ENCODE measurements at regions of chr4 and their contacts with region 1.

Region 1: GRCh38 chr4:112199040-112199439 is 32.5 kb upstream of the AP1AR start:
- DNase-seq: no peak
- H3K4me3 Mint-ChIP-seq: no peak overlapping the region
- H3K27ac Mint-ChIP-seq: no peak overlapping the region
- H3K4me1 Mint-ChIP-seq: peaks cover 21% of the 10 kb centered on the region
- H3K27me3 Mint-ChIP-seq: peaks cover 10% of the 10 kb centered on the region

Region 2: DNA sequence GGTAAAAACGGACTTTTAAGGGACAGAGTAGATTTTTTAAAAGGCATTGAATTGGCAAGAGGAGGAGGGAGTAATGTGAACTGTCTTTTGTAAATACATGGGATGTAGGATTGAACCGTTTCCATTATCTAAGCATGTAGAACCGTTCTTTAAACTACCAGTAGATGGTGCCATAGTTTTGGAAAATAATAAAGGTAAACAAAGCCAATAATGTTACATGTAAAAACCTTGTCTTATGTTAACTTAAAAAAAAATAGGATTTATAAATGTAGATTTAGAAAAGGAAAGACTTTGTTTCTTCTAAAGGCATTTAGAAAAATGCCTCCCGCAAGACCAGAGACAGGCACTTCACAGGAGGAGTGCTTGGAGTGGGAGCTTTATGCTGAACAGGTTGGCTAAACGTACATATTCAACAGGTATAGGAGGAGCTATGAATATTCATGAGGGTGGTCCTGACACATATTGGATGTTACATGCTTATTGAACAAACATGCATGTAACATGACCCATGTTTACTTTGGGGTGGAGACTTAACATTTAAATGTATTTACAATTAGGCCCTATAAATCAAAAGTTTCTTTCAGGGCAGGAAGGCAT is 99.2 kb before region 1 on chr4:
- CTCF ChIA-PET with region 1: interaction called, 8 read pairs
- intact Hi-C with region 1: loop called (anchors 2 kb)
- DNase-seq: no peak
- H3K4me3 Mint-ChIP-seq: no peak overlapping the region
- H3K27ac Mint-ChIP-seq: no peak overlapping the region
- H3K4me1 Mint-ChIP-seq: peaks cover 5% of the 10 kb centered on the region
- H3K27me3 Mint-ChIP-seq: peaks cover 3% of the 10 kb centered on the region

Region 3: DNA sequence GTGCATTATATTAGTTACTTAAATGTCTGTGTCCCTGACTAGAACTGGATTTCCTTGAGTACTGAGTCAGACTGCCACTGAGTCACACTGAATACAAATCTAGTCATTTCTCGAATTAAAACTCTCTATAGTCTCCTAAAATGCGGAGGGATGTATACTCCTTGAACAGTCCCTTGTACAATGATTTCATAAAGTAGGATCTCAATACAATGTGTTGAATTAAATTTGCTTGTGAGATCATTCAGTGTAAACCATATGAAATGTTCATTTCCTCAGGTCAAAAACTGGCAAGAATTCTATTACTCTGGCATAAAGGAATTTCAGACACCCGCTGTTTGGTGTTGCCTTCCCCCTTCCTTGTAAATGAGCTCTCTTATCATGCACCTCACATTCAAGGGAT is 71.2 kb before region 1 on chr4:
- CTCF ChIA-PET with region 1: no interaction called
- intact Hi-C with region 1: loop called (anchors 1 kb)
- DNase-seq: peak; percentile 17
- H3K4me3 Mint-ChIP-seq: no peak overlapping the region
- H3K27ac Mint-ChIP-seq: no peak overlapping the region
- H3K4me1 Mint-ChIP-seq: peaks cover 9% of the 10 kb centered on the region
- H3K27me3 Mint-ChIP-seq: peaks cover 2% of the 10 kb centered on the region

Region 4: DNA sequence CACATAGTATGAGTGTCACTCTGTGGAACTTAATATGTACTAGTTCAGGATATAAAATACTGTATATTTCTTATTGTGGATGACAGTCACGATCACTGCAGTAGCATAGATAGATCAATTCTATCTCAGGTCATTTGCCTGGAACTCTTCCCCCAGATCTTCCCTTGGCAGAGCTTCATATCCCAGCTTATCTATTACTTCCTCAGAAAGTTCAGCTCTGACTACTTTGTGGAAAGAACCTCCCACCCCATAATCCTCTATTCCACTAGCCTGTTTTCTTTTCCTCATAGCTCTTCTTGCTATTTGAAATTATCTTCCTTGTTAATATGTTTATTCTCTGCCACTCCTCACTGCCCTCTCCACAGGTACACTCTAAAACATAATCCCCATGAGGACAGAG is 42.9 kb before region 1 on chr4:
- CTCF ChIA-PET with region 1: no interaction called
- intact Hi-C with region 1: no loop called
- DNase-seq: no peak
- H3K4me3 Mint-ChIP-seq: no peak overlapping the region
- H3K27ac Mint-ChIP-seq: no peak overlapping the region
- H3K4me1 Mint-ChIP-seq: peaks cover 42% of the 10 kb centered on the region
- H3K27me3 Mint-ChIP-seq: no peaks in the 10 kb centered on the region

Region 5: GRCh38 chr4:112184438-112184837 is 14.6 kb before region 1 on chr4:
- CTCF ChIA-PET with region 1: no interaction called
- intact Hi-C with region 1: loop called (anchors 1 kb)
- DNase-seq: no peak
- H3K4me3 Mint-ChIP-seq: no peak overlapping the region
- H3K27ac Mint-ChIP-seq: no peak overlapping the region
- H3K4me1 Mint-ChIP-seq: peaks cover 39% of the 10 kb centered on the region
- H3K27me3 Mint-ChIP-seq: no peaks in the 10 kb centered on the region

Region 6: GRCh38 chr4:112735474-112735951 is 536.5 kb after region 1 on chr4:
- CTCF ChIA-PET with region 1: no interaction called
- intact Hi-C with region 1: loop called (anchors 1 kb)
- DNase-seq: peak; percentile 21
- H3K4me3 Mint-ChIP-seq: no peak overlapping the region
- H3K27ac Mint-ChIP-seq: no peak overlapping the region
- H3K4me1 Mint-ChIP-seq: peaks cover 14% of the 10 kb centered on the region
- H3K27me3 Mint-ChIP-seq: no peaks in the 10 kb centered on the region

Measured in activated naive CD4-positive, alpha-beta T cell treated with anti-CD3 and anti-CD28 coated beads for 36 hours (primary cell).